BJ (cell line): ENCODE measurements at regions of chr2 and their contacts with region 1.

Region 1: GRCh38 chr2:168961450-168962229 is 60.5 kb downstream of the G6PC2 start:
- DNase-seq: peak; percentile 23
- H3K4me3 ChIP-seq: no peak overlapping the region
- H3K27me3 ChIP-seq: no peaks in the 10 kb centered on the region; the same call in 1 of the 2 replicates
- CTCF ChIP-seq: peak; percentile 79

Region 2: DNA sequence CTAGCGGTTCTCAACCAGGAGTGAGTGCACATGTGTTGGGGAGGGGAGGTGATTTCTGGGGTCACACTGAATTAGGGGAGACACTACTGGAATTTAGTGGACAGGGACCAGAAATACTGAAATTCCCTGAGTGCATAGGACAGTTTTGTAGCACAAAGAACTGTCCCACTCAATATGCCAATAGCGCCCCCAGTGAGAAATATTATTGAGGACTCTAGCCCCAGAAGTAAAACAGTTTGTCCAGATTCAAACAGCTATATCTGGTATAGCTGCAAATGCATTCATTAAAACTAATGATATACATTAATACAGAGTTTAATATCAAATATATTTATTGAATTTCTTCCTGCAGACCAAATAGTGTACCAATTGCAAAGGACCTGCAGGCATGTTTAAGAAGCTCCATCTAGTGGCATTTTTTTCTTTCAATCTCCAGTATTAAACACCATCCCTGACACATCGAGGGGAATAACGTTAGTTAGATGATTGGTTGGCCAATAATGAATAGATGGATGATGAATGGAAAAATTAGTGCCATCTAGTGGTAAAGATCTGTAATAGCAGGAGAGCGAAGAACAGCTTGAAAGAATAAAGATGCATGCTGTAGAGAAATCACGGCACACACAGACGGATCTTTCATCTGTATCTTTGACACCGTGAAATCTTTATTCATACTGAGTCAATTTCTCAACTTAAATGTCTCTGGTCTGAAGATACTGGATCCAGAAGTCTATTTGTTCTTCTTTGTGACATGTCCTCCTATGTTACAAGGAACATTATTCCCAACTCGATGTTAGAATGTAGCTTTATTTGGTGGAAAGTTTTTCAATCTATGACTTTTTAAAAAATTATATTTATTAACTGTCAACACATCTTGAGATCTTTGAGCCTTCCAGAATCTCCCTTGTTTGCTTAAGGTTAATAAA is 170.2 kb after region 1 on chr2:
- CTCF ChIA-PET with region 1: interaction called, 10 read pairs
- POLR2A ChIA-PET with region 1: no interaction called
- DNase-seq: no peak
- H3K4me3 ChIP-seq: no peak overlapping the region
- H3K27me3 ChIP-seq: no peaks in the 10 kb centered on the region
- CTCF ChIP-seq: peak; percentile 66